Mammary epithelial cell (primary cell): ENCODE measurements at regions of chr18 and their contacts with region 1.

Region 1: DNA sequence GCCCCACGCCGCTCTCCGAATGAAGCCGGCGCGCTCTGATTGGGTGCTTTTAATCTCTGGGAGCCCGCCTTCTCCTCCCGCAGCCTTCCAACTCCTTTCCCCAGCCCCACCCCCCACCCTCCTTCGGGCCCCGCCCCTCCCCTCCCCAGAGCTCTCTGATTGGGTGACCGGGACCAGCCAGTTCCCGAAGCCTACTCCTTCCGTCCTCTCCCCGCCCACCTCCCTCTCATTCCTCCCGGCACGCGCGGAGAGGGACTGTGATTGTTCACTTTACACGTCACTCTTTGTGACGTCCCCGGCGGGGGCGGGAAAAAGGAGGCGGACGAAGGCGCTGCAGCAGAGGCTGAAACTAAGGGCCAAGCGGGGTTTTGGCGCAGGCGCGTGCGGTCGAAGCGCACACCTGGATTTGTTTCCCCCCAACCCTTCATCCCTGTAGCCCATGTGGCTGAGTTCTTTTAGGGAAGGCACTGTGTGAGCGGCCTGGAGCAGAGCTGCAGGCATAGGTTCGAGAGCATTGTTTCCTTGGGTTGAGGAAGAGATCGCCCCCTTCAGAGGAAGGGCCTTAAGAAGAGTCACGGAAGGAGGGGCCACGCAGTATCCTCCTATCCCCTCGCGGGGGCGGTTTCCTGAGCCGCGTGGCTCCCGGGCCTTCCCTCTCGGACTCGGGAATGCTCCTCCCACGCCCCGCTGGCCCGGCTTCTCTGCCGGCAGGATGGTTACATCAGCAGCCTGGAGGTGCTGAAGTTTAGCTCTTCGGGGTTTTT is at the start of gene MEX3C:
- DNase-seq: peak; percentile 99
- H3K4me3 ChIP-seq: peak within 1 kb of the TSS; percentile 74 to 83 (median 76)
- H3K27ac ChIP-seq: peak within 1 kb of the TSS; percentile 98
- H3K4me1 ChIP-seq: peaks cover 10% of the 10 kb centered on the region
- H3K27me3 ChIP-seq: no peaks in the 10 kb centered on the region
- CTCF ChIP-seq: peak in 1 of 2 donors; percentile 41
- total RNA-seq, gene MEX3C: 79.1 to 102 TPM

Region 2: DNA sequence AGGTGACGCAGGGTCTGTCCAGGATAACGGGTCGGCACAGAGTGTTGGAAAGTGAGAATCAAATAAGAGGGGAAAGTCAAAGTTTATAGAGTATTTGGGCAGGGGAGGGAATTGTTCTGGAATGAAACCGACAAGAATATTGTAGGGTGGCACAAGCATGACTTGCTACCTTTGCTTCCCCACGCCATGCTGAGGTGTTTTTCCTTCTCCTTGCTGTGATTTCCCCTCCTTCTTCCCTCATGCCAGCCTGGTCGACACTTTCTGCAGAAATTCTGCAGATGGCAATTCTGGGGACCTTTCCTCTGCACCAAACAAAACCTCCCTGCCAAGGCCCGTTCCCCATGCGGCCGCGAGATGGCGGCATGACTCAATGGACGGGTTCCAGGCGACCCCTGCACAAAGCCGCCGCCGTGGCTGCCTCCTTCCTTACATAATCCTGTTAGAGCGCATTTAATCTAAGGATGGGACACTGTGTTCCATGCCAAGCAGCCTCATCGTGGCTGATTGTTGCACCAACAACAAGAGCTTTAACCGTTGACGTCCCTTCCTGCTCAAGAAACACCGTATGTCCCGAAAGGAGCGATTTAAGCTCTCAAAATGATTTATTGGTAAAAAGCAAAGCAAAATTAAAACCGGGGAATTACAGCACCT is 378.0 kb before region 1 on chr18 and contains the start of gene MRO:
- CTCF ChIA-PET with region 1: interaction called, 10 read pairs
- dilution Hi-C with region 1: no loop called
- in situ Hi-C with region 1: no loop called
- intact Hi-C with region 1: no loop called
- DNase-seq: peak; percentile 46
- H3K4me3 ChIP-seq: peak within 1 kb of the TSS; percentile 35 to 51 (median 45)
- H3K27ac ChIP-seq: no peak within 1 kb of the TSS
- H3K4me1 ChIP-seq: peaks cover 12% of the 10 kb centered on the region
- H3K27me3 ChIP-seq: no peaks in the 10 kb centered on the region
- CTCF ChIP-seq: peak; percentile 96 to 97
- total RNA-seq, gene MRO: not detected

Region 3: GRCh38 chr18:51110073-51110803 is 87.6 kb before region 1 on chr18:
- CTCF ChIA-PET with region 1: no interaction called
- dilution Hi-C with region 1: no loop called
- in situ Hi-C with region 1: no loop called
- intact Hi-C with region 1: loop called (anchors 2 kb)
- DNase-seq: peak; percentile 25
- H3K4me3 ChIP-seq: peak overlapping the region in 2 of 3 experiments; percentile 40 to 46
- H3K27ac ChIP-seq: no peak overlapping the region
- H3K4me1 ChIP-seq: peaks cover 8% of the 10 kb centered on the region
- H3K27me3 ChIP-seq: no peaks in the 10 kb centered on the region
- CTCF ChIP-seq: peak; percentile 70 to 97

Region 4: DNA sequence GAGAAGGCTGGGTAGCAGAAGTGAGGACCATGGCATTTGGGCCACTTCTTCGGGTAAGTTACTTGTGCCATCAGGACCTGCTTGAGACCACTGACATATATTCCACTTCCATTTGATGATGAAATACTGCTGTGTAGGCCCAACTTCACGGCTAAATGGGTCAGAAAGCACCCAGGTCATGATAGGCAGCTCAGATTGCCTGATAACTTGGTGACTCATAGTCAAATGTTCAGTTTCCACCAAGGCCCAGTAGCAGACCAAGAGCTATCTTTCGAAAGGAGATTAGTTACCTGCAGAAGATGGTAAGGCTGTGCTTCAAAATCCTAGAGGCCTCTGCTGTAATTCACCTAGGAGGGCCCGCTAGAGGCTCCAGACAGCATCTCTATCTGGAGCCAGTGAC is 31.5 kb after region 1 on chr18:
- CTCF ChIA-PET with region 1: no interaction called
- dilution Hi-C with region 1: no loop called
- in situ Hi-C with region 1: no loop called
- intact Hi-C with region 1: no loop called
- DNase-seq: no peak
- H3K4me3 ChIP-seq: no peak overlapping the region
- H3K27ac ChIP-seq: no peak overlapping the region
- H3K4me1 ChIP-seq: peaks cover 7% of the 10 kb centered on the region
- H3K27me3 ChIP-seq: no peaks in the 10 kb centered on the region
- CTCF ChIP-seq: no peak

Region 5: GRCh38 chr18:51278045-51278649 is 80.3 kb after region 1 on chr18:
- CTCF ChIA-PET with region 1: no interaction called
- dilution Hi-C with region 1: no loop called
- in situ Hi-C with region 1: no loop called
- intact Hi-C with region 1: loop called (anchors 5 kb)
- DNase-seq: peak; percentile 57
- H3K4me3 ChIP-seq: no peak overlapping the region
- H3K27ac ChIP-seq: no peak overlapping the region
- H3K4me1 ChIP-seq: no peaks in the 10 kb centered on the region
- H3K27me3 ChIP-seq: no peaks in the 10 kb centered on the region
- CTCF ChIP-seq: peak; percentile 96 to 98

Region 6: GRCh38 chr18:51342820-51343219 is 145.0 kb after region 1 on chr18:
- CTCF ChIA-PET with region 1: no interaction called
- dilution Hi-C with region 1: no loop called
- in situ Hi-C with region 1: no loop called
- intact Hi-C with region 1: loop called (anchors 5 kb)
- DNase-seq: peak; percentile 89
- H3K4me3 ChIP-seq: no peak overlapping the region
- H3K27ac ChIP-seq: no peak overlapping the region
- H3K4me1 ChIP-seq: peaks cover 43% of the 10 kb centered on the region
- H3K27me3 ChIP-seq: no peaks in the 10 kb centered on the region
- CTCF ChIP-seq: no peak

Region 7: GRCh38 chr18:51614033-51614432 is 416.2 kb after region 1 on chr18:
- CTCF ChIA-PET with region 1: no interaction called
- dilution Hi-C with region 1: no loop called
- in situ Hi-C with region 1: loop called in 1 of 2 experiments (anchors 10 kb)
- intact Hi-C with region 1: loop called (anchors 2 kb)
- DNase-seq: peak; percentile 97
- H3K4me3 ChIP-seq: no peak overlapping the region
- H3K27ac ChIP-seq: peak overlapping the region; percentile 79
- H3K4me1 ChIP-seq: peaks cover 49% of the 10 kb centered on the region
- H3K27me3 ChIP-seq: no peaks in the 10 kb centered on the region
- CTCF ChIP-seq: no peak